ENCODE measurements at regions of chrX and their contacts with region 1.

Region 1: GRCh38 chrX:123157586-123157985 is 26.5 kb upstream of the GRIA3 start:
- DNase-seq: no peak
- ATAC-seq: no peak
- H3K4me3 ChIP-seq: no peak overlapping the region
- H3K27ac ChIP-seq: no peak overlapping the region
- H3K4me1 ChIP-seq: no peaks in the 10 kb centered on the region
- H3K27me3 ChIP-seq: no peaks in the 10 kb centered on the region
- CTCF ChIP-seq: no peak

Region 2: DNA sequence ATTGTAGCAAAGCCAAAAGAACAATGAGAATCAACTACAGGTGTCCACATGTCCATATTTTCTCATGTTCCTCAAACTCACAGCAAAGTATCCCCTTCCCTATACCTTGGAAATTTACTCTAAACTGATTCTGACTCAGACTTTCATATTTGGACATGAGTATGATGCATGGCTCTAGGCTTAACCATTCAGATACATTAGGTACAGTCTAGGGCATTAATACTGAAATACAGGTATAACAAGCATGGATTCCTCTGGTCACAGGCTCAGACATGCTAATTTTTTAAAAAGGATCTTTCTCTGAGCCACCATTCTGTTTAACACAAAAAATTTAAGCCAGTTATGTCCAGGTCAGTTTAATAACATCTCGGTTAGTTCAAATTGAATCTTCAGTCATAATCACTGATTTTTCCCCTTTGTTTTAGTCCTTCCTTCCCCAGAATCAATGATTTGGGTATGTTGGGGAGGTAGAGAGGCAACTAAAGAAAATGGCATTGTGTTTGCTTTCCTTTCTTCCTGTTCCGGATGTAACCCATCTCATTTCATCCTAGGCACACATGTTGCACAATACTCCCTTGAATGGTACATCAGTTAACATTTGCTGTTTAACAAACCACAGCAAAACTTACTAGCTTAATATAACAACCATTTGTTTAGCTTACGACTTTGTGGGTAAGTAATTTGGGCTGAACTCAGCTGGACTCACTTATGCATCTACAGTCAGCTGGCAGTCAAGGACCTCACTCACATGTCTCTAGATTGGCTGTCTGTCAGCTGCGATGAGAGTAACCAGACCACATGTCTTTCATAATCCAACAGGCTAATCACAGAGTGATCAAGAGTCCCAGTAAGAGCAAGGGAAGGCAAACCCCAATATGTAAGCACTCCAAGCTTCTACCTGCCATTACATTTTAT is 48.8 kb before region 1 on chrX:
- intact Hi-C with region 1: loop called in 1 of 2 experiments (anchors 2 kb)
- DNase-seq: no peak
- ATAC-seq: no peak
- H3K4me3 ChIP-seq: no peak overlapping the region
- H3K27ac ChIP-seq: no peak overlapping the region
- H3K4me1 ChIP-seq: no peaks in the 10 kb centered on the region
- H3K27me3 ChIP-seq: no peaks in the 10 kb centered on the region
- CTCF ChIP-seq: no peak

Region 3: DNA sequence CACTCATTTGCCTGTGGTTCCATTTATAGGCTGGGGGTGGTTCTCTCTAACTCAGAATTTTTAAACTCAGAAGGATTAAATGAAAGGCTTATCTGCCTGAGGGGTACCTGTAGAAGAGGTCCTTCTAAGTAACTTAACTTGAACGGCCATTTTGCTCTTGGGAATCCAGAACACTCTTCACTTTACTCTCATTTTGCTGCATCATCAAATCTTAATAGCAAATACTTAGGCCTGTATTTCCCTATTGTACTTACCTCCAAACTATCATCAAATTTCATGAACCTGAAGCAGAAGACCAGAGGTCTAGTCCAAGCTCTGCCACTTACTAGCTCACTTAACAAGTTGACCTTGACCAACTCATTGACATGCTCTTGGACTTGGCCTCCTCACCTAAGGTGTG is 96.9 kb after region 1 on chrX:
- intact Hi-C with region 1: no loop called
- DNase-seq: no peak
- ATAC-seq: no peak
- H3K4me3 ChIP-seq: no peak overlapping the region
- H3K27ac ChIP-seq: no peak overlapping the region
- H3K4me1 ChIP-seq: no peaks in the 10 kb centered on the region
- H3K27me3 ChIP-seq: no peaks in the 10 kb centered on the region
- CTCF ChIP-seq: no peak

Measured in psoas muscle (tissue), 8 donors.